CD8-positive, alpha-beta T cell (primary cell): ENCODE measurements at regions of chr15 and their contacts with region 1.

Region 1: GRCh38 chr15:98779463-98780071 is 131.2 kb downstream of the IGF1R start:
- DNase-seq: peak; percentile 44 to 82 (median 72)
- ATAC-seq: peak; percentile 84
- H3K4me3 ChIP-seq: no peak overlapping the region
- H3K4me3 Mint-ChIP-seq: peak overlapping the region; percentile 52
- H3K27ac ChIP-seq: no peak overlapping the region
- H3K27ac Mint-ChIP-seq: no peak overlapping the region
- H3K4me1 ChIP-seq: peaks cover 25% of the 10 kb centered on the region
- H3K4me1 Mint-ChIP-seq: peaks cover 38% of the 10 kb centered on the region
- H3K27me3 ChIP-seq: no peaks in the 10 kb centered on the region
- H3K27me3 Mint-ChIP-seq: no peaks in the 10 kb centered on the region
- CTCF ChIP-seq: peak; percentile 91

Region 2: GRCh38 chr15:98658831-98659699 is 120.5 kb before region 1 on chr15:
- CTCF ChIA-PET with region 1: interaction called, 3 read pairs
- POLR2A ChIA-PET with region 1: interaction called, 4 read pairs
- intact Hi-C with region 1: loop called in 1 of 2 experiments (anchors 10 kb)
- DNase-seq: peak in 6 of 9 experiments; percentile 7 to 70 (median 36)
- ATAC-seq: peak; percentile 66
- H3K4me3 ChIP-seq: no peak overlapping the region
- H3K4me3 Mint-ChIP-seq: no peak overlapping the region
- H3K27ac ChIP-seq: no peak overlapping the region
- H3K27ac Mint-ChIP-seq: no peak overlapping the region
- H3K4me1 ChIP-seq: peaks cover 21% of the 10 kb centered on the region
- H3K4me1 Mint-ChIP-seq: peaks cover 52% of the 10 kb centered on the region
- H3K27me3 ChIP-seq: no peaks in the 10 kb centered on the region
- H3K27me3 Mint-ChIP-seq: peaks cover 1% of the 10 kb centered on the region
- CTCF ChIP-seq: peak; percentile 96

Region 3: DNA sequence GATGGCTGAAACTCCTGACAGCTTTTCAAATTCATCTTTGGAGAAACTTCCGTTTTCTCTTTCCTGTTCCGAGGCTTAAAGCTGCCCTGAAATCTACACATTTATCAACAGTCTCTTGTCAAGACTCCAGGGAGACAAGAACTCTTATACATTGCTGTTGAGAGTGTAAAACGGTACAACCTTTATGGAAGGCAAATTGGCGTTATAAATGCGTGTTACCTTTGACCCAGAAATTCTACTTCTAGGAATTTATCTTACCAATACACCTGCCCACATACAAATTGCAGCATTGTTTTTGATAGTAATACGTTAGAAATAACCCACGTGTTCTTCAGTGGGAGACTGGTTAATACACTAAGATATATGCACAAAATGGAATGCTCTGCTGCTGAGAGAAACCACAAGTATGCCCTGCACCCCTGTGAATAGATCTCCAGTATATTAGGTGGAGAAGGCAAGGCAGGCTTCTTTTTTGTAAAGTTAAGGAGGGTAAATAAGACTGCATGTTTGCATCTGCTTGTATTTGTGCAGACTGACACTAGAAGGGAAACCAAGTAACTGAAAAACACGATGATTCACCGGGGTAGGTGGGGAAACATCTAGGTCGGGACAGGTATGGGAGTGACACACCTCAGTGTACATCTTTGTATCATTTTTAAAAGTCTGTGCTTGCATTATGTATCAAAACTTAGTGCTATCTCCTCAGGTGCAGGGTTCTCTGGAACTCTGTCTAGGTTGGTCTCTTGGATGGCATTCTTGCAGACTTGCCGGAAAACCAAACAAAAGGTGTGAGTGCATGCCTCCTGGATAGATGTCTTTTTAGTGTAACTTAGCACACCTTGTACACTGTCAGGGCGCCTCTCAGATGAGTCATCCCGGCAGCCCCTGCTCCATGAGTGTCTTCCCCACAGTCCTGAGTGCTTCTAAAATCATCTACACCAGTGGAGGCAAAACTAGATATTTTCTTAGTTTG is 33.6 kb before region 1 on chr15:
- CTCF ChIA-PET with region 1: no interaction called
- POLR2A ChIA-PET with region 1: no interaction called
- intact Hi-C with region 1: no loop called
- DNase-seq: no peak
- ATAC-seq: no peak
- H3K4me3 ChIP-seq: no peak overlapping the region
- H3K4me3 Mint-ChIP-seq: no peak overlapping the region
- H3K27ac ChIP-seq: no peak overlapping the region
- H3K27ac Mint-ChIP-seq: no peak overlapping the region
- H3K4me1 ChIP-seq: peaks cover 19% of the 10 kb centered on the region
- H3K4me1 Mint-ChIP-seq: peaks cover 62% of the 10 kb centered on the region
- H3K27me3 ChIP-seq: no peaks in the 10 kb centered on the region
- H3K27me3 Mint-ChIP-seq: no peaks in the 10 kb centered on the region
- CTCF ChIP-seq: no peak

Region 4: DNA sequence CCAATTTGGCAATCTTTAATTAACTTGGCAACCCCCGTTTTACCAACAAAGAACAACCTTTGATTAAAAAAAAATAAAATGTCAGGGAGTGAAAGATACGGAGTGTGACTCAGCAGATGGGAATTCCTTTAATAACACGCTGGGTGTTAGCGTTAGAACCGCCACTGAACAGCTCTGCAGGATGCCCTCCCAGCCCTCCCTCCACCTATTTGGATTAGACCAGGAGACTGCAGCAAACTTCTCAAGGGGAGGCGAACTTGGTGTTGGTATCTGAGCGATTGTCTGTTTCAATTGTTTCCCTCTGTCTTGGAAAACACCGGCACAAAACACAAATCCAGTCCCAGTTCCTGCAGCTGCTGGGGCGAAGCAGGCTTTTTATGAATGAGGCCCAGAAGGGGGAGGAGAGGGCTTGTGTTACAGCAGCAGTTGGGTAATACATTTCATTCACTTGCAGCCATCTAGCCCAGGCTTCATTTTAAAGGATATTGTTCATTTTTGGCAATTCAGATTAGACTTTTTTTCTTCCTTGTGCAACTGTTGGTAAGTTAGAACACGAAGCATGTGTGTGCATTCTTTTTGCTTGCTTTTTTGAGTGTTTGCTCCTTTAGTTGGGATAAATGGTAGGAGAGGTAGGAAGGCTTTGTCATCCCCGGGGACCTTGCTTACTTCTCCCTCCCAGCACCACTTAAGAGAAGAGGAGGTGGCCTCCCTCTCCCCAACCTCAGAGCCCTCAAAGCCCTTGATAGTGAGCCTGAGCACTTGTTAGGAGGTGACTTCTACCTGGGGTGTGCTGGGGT is 21.1 kb after region 1 on chr15:
- CTCF ChIA-PET with region 1: interaction called, 27 read pairs
- POLR2A ChIA-PET with region 1: no interaction called
- intact Hi-C with region 1: loop called in 1 of 2 experiments (anchors 2 kb)
- DNase-seq: no peak
- ATAC-seq: no peak
- H3K4me3 ChIP-seq: no peak overlapping the region
- H3K4me3 Mint-ChIP-seq: peak overlapping the region; percentile 58
- H3K27ac ChIP-seq: no peak overlapping the region
- H3K27ac Mint-ChIP-seq: peak overlapping the region; percentile 78
- H3K4me1 ChIP-seq: peaks cover 38% of the 10 kb centered on the region
- H3K4me1 Mint-ChIP-seq: peaks cover 64% of the 10 kb centered on the region
- H3K27me3 ChIP-seq: no peaks in the 10 kb centered on the region
- H3K27me3 Mint-ChIP-seq: no peaks in the 10 kb centered on the region
- CTCF ChIP-seq: no peak

Region 5: DNA sequence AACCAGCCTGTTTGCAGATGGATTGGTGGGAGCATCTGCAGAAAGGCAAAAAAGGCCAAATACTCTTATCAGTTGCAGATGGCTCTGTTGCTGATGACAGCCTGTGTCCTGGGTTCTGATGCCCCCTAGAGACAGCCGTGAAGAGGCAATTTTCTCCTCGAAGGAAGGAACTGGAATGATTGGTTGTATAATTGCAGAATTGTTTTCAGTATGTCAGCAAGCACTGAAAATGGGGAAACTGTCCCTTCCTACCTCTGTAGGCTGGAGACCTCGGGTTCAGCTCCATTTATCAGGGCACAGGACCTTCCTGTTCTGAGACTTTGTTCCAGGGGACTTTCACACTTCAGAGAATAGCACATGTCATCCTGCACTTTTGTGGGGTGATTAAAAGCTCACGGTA is 125.0 kb after region 1 on chr15:
- CTCF ChIA-PET with region 1: interaction called, 4 read pairs
- POLR2A ChIA-PET with region 1: no interaction called
- intact Hi-C with region 1: loop called in 1 of 2 experiments (anchors 1 kb)
- DNase-seq: peak in 2 of 9 experiments; percentile 27 to 37
- ATAC-seq: no peak
- H3K4me3 ChIP-seq: no peak overlapping the region
- H3K4me3 Mint-ChIP-seq: no peak overlapping the region
- H3K27ac ChIP-seq: no peak overlapping the region
- H3K27ac Mint-ChIP-seq: no peak overlapping the region
- H3K4me1 ChIP-seq: no peaks in the 10 kb centered on the region
- H3K4me1 Mint-ChIP-seq: no peaks in the 10 kb centered on the region
- H3K27me3 ChIP-seq: no peaks in the 10 kb centered on the region
- H3K27me3 Mint-ChIP-seq: no peaks in the 10 kb centered on the region
- CTCF ChIP-seq: no peak

Region 6: GRCh38 chr15:99076552-99077308 is 297.2 kb after region 1 on chr15:
- CTCF ChIA-PET with region 1: interaction called, 8 read pairs
- POLR2A ChIA-PET with region 1: no interaction called
- intact Hi-C with region 1: loop called (anchors 1 to 5 kb)
- DNase-seq: peak in 8 of 9 experiments; percentile 20 to 79 (median 40)
- ATAC-seq: peak; percentile 71
- H3K4me3 ChIP-seq: peak overlapping the region; percentile 43 to 45
- H3K4me3 Mint-ChIP-seq: peak overlapping the region; percentile 81
- H3K27ac ChIP-seq: no peak overlapping the region
- H3K27ac Mint-ChIP-seq: no peak overlapping the region
- H3K4me1 ChIP-seq: peaks cover 3% of the 10 kb centered on the region
- H3K4me1 Mint-ChIP-seq: peaks cover 7% of the 10 kb centered on the region
- H3K27me3 ChIP-seq: no peaks in the 10 kb centered on the region
- H3K27me3 Mint-ChIP-seq: peaks cover 9% of the 10 kb centered on the region
- CTCF ChIP-seq: peak; percentile 83